SK-MEL-5 (cell line): ENCODE measurements at regions of chr18 and their contacts with region 1.

Region 1: DNA sequence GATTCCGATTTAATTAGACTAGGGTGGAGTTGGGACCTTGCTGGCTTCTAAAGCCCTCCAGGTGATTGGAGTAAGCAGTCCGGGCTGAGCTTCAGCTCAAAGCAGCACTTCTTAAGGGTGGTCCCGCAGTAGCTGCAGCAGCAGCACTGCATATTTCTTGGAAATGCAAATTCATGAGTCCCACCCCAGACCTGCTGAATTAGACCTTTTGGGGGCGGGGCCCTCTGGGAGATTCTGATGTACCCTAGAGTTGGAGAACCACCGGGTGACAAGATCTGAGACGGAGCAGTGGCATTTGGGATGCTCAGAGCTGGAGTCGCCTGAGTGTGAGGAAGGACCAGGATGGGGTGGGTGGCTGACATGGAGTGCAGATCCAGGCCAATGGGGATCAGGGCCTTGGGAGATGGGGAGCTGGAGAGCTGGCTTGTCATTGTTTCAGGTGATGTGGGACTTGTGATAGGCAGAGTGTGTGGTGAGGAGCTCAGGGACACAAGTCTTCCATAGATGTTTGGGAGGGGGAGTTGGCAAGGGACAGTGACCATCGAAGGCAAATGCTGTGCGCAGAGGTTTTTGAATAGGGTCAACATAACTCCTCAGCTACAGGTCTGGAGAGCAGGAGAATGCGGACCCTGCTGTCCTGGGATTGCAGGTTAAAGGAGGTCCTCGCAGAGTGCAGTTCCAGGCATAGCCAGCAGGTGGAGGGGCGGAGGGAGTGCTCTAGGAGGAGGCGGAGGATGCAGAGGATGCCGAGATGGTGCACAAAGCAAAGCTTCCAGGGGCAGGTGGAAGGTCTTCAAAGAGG is 130.9 kb upstream of the RAB12 start:
- DNase-seq: peak; percentile 65

Region 2: GRCh38 chr18:8003878-8004675 is 474.3 kb before region 1 on chr18:
- in situ Hi-C with region 1: no loop called
- DNase-seq: no peak

Region 3: GRCh38 chr18:8177330-8178016 is 300.9 kb before region 1 on chr18:
- in situ Hi-C with region 1: loop called (anchors 10 kb)
- DNase-seq: peak; percentile 90